Pancreas (tissue), 10 donors: ENCODE measurements at regions of chr7 and their contacts with region 1.

Region 1: DNA sequence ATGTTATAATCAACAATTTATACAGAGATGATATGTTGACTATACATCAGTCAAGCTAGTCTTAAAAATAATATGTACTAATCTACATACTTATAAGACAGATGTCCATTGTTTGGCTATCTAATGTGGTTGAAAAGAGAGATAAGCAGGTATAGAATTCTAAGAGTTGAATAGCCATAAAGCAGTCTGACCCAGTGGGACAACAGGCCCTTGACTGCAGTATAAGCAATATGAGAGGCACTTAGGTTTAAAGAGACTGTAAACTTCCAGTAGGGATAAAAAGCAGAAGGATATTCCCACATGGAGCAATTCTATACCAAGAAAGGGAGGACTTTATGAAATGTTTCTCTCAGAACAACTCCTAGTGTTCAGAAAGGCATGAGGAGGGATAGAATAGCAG is 139.3 kb downstream of the ELAPOR2 start:
- DNase-seq: no peak
- ATAC-seq: no peak
- H3K4me3 ChIP-seq: no peak overlapping the region
- H3K27ac ChIP-seq: no peak overlapping the region
- H3K4me1 ChIP-seq: no peaks in the 10 kb centered on the region
- H3K27me3 ChIP-seq: no peaks in the 10 kb centered on the region
- CTCF ChIP-seq: no peak

Region 2: GRCh38 chr7:86692755-86693154 is 227.4 kb before region 1 on chr7:
- intact Hi-C with region 1: no loop called
- DNase-seq: no peak
- ATAC-seq: no peak
- H3K4me3 ChIP-seq: no peak overlapping the region
- H3K27ac ChIP-seq: no peak overlapping the region
- H3K4me1 ChIP-seq: no peaks in the 10 kb centered on the region
- H3K27me3 ChIP-seq: no peaks in the 10 kb centered on the region
- CTCF ChIP-seq: no peak

Region 3: GRCh38 chr7:86884152-86884551 is 36.0 kb before region 1 on chr7:
- intact Hi-C with region 1: no loop called
- DNase-seq: no peak
- ATAC-seq: no peak
- H3K4me3 ChIP-seq: no peak overlapping the region
- H3K27ac ChIP-seq: no peak overlapping the region
- H3K4me1 ChIP-seq: no peaks in the 10 kb centered on the region
- H3K27me3 ChIP-seq: no peaks in the 10 kb centered on the region
- CTCF ChIP-seq: no peak

Region 4: GRCh38 chr7:87234949-87235348 is 314.8 kb after region 1 on chr7:
- intact Hi-C with region 1: loop called in 1 of 3 experiments (anchors 5 kb)
- DNase-seq: no peak
- ATAC-seq: no peak
- H3K4me3 ChIP-seq: no peak overlapping the region
- H3K27ac ChIP-seq: no peak overlapping the region
- H3K4me1 ChIP-seq: peaks cover 5 to 9% (median 9%) of the 10 kb centered on the region in 3 donors
- H3K27me3 ChIP-seq: peaks cover 0 to 8% (median 0%) of the 10 kb centered on the region in 4 donors
- CTCF ChIP-seq: no peak